ENCODE measurements at regions of chr10 and their contacts with region 1.

Region 1: DNA sequence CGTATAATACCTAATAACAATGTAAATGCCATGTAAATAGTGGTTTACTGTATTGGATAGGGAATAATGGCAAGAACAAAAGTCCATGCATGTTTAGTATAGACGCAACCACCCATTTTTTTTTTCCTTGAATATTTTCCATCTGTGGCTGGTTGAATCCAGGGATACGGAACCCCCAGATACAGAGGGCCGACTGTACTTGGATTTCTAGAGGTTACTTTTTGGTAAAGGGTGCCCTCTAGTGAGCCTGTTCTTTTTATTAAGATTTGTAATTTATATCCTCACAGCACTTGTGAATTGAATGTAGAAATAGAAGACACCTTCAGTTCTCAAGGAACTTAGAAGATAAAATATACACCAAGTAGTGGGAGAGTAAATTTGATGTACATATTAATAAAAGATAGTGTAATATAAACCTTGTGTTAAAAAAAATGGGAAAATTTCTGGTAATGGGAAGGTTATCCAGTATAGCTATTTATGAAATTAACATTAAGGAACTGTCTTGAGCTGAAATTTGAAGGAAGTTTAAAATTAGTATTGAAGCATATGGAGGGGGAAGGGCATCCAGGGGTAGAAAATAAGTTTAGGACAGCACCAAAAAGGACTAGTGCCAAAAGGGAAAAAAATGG is 32.0 kb downstream of the EXOC6 start:
- DNase-seq: peak in 1 of 2 experiments; percentile 59
- H3K4me3 ChIP-seq: no peak overlapping the region
- H3K4me3 Mint-ChIP-seq: no peak overlapping the region
- H3K27ac Mint-ChIP-seq: no peak overlapping the region
- H3K4me1 ChIP-seq: peaks cover 6% of the 10 kb centered on the region; the same call in 1 of the 2 replicates
- H3K4me1 Mint-ChIP-seq: no peaks in the 10 kb centered on the region
- H3K27me3 ChIP-seq: no peaks in the 10 kb centered on the region
- H3K27me3 Mint-ChIP-seq: no peaks in the 10 kb centered on the region
- CTCF ChIP-seq: peak; percentile 54 to 58

Region 2: DNA sequence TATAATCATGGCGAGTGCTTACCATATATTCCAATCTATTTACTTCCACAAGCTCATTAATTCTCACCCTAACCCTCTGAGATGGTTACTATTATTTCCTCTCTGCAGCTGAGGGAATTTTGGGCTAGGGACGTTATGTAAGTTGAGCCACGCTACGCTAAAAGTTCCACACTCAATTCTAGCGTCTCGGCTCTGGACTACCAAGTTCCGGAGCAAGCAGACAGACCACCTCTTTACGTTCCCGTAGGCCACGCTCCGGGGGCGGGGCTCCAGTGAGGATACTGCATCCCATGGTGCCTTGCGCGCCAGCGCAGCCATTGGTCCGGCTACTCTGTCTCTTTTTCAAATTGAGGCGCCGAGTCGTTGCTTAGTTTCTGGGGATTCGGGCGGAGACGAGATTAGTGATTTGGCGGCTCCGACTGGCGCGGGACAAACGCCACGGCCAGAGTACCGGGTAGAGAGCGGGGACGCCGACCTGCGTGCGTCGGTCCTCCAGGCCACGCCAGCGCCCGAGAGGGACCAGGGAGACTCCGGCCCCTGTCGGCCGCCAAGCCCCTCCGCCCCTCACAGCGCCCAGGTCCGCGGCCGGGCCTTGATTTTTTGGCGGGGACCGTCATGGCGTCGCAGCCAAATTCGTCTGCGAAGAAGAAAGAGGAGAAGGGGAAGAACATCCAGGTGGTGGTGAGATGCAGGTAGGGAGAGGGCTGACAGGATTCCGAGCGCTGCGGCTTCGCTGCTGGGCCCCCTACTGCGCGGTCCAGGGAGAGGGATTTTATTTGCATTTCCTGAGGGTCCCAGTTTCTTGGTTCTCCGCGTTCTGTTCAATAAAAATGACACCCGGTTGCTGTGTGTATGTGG is 287.4 kb before region 1 on chr10 and contains the start of gene KIF11:
- CTCF ChIA-PET with region 1: no interaction called
- POLR2A ChIA-PET with region 1: no interaction called
- intact Hi-C with region 1: loop called (anchors 10 kb)
- DNase-seq: peak; percentile 98
- H3K4me3 ChIP-seq: peak within 1 kb of the TSS; percentile 80
- H3K4me3 Mint-ChIP-seq: peak within 1 kb of the TSS; percentile 100
- H3K27ac Mint-ChIP-seq: peak within 1 kb of the TSS; percentile 99
- H3K4me1 ChIP-seq: peaks cover 5% of the 10 kb centered on the region; the same call in 1 of the 2 replicates
- H3K4me1 Mint-ChIP-seq: peaks cover 30% of the 10 kb centered on the region
- H3K27me3 ChIP-seq: no peaks in the 10 kb centered on the region
- H3K27me3 Mint-ChIP-seq: no peaks in the 10 kb centered on the region
- CTCF ChIP-seq: peak in 1 of 2 experiments; percentile 2
- total RNA-seq, gene KIF11: 37.7 TPM in 2 replicates

Region 3: GRCh38 chr10:92689663-92690210 is 190.6 kb before region 1 on chr10 and contains the start of gene HHEX:
- CTCF ChIA-PET with region 1: no interaction called
- POLR2A ChIA-PET with region 1: no interaction called
- intact Hi-C with region 1: loop called (anchors 1 kb)
- DNase-seq: peak; percentile 38 to 64
- H3K4me3 ChIP-seq: peak within 1 kb of the TSS; percentile 87
- H3K4me3 Mint-ChIP-seq: peak within 1 kb of the TSS; percentile 77
- H3K27ac Mint-ChIP-seq: no peak within 1 kb of the TSS
- H3K4me1 ChIP-seq: peaks cover 15% of the 10 kb centered on the region
- H3K4me1 Mint-ChIP-seq: peaks cover 7% of the 10 kb centered on the region
- H3K27me3 ChIP-seq: no peaks in the 10 kb centered on the region
- H3K27me3 Mint-ChIP-seq: no peaks in the 10 kb centered on the region
- CTCF ChIP-seq: no peak
- total RNA-seq, gene HHEX: 5.8 and 6.7 TPM in 2 replicates

Region 4: GRCh38 chr10:92848441-92849233 is 31.7 kb before region 1 on chr10 and contains the start of gene EXOC6:
- CTCF ChIA-PET with region 1: interaction called, 9 read pairs
- POLR2A ChIA-PET with region 1: no interaction called
- intact Hi-C with region 1: loop called (anchors 1 kb)
- DNase-seq: peak; percentile 80 to 87
- H3K4me3 ChIP-seq: peak within 1 kb of the TSS; percentile 78
- H3K4me3 Mint-ChIP-seq: peak within 1 kb of the TSS; percentile 75
- H3K27ac Mint-ChIP-seq: peak within 1 kb of the TSS; percentile 48
- H3K4me1 ChIP-seq: peaks cover 4% of the 10 kb centered on the region; the same call in 1 of the 2 replicates
- H3K4me1 Mint-ChIP-seq: peaks cover 8% of the 10 kb centered on the region
- H3K27me3 ChIP-seq: no peaks in the 10 kb centered on the region
- H3K27me3 Mint-ChIP-seq: no peaks in the 10 kb centered on the region
- CTCF ChIP-seq: peak in 1 of 2 experiments; percentile 32
- total RNA-seq, gene EXOC6: 12.5 and 13.4 TPM in 2 replicates

Region 5: DNA sequence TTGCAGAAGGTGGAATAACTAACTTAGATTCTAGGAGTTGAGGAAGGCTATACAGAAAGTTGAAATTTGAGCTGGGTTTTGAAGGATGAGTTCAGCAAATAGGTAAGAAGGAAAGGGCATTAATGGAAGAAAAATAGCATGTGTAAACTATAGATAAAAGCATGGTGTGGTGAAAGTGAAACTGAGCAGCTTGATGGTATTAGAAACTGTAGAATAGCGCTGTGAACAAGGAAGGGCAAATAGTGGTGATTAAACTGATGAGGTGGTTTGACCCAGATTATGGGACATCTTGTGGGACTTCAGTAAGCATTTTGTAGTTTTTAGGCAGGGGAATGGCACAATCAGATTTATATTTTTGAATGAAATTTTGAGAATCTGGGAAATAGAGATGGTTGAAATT is 58.5 kb after region 1 on chr10:
- CTCF ChIA-PET with region 1: no interaction called
- POLR2A ChIA-PET with region 1: no interaction called
- intact Hi-C with region 1: no loop called
- DNase-seq: no peak
- H3K4me3 ChIP-seq: no peak overlapping the region
- H3K4me3 Mint-ChIP-seq: no peak overlapping the region
- H3K27ac Mint-ChIP-seq: no peak overlapping the region
- H3K4me1 ChIP-seq: no peaks in the 10 kb centered on the region
- H3K4me1 Mint-ChIP-seq: no peaks in the 10 kb centered on the region
- H3K27me3 ChIP-seq: no peaks in the 10 kb centered on the region
- H3K27me3 Mint-ChIP-seq: no peaks in the 10 kb centered on the region
- CTCF ChIP-seq: no peak

Region 6: GRCh38 chr10:93039721-93040120 is 159.4 kb after region 1 on chr10:
- CTCF ChIA-PET with region 1: no interaction called
- POLR2A ChIA-PET with region 1: no interaction called
- intact Hi-C with region 1: loop called (anchors 1 kb)
- DNase-seq: peak in 1 of 2 experiments; percentile 45
- H3K4me3 ChIP-seq: no peak overlapping the region
- H3K4me3 Mint-ChIP-seq: no peak overlapping the region
- H3K27ac Mint-ChIP-seq: no peak overlapping the region
- H3K4me1 ChIP-seq: no peaks in the 10 kb centered on the region
- H3K4me1 Mint-ChIP-seq: no peaks in the 10 kb centered on the region
- H3K27me3 ChIP-seq: no peaks in the 10 kb centered on the region
- H3K27me3 Mint-ChIP-seq: no peaks in the 10 kb centered on the region
- CTCF ChIP-seq: peak; percentile 32 to 59

Region 7: GRCh38 chr10:93165367-93165766 is 285.0 kb after region 1 on chr10:
- CTCF ChIA-PET with region 1: no interaction called
- POLR2A ChIA-PET with region 1: no interaction called
- intact Hi-C with region 1: no loop called
- DNase-seq: no peak
- H3K4me3 ChIP-seq: no peak overlapping the region
- H3K4me3 Mint-ChIP-seq: no peak overlapping the region
- H3K27ac Mint-ChIP-seq: no peak overlapping the region
- H3K4me1 ChIP-seq: no peaks in the 10 kb centered on the region
- H3K4me1 Mint-ChIP-seq: no peaks in the 10 kb centered on the region
- H3K27me3 ChIP-seq: no peaks in the 10 kb centered on the region
- H3K27me3 Mint-ChIP-seq: no peaks in the 10 kb centered on the region
- CTCF ChIP-seq: no peak